HepG2 (cell line): ENCODE measurements at regions of chr13 and their contacts with region 1.

Region 1: GRCh38 chr13:97810152-97810551 is 143.3 kb upstream of the IPO5 start:
- DNase-seq: peak; percentile 13
- ATAC-seq: no peak
- H3K4me3 ChIP-seq: no peak overlapping the region
- H3K27ac ChIP-seq: no peak overlapping the region
- H3K4me1 ChIP-seq: no peaks in the 10 kb centered on the region
- H3K27me3 ChIP-seq: no peaks in the 10 kb centered on the region; a peak in 1 of 5 replicates
- CTCF ChIP-seq: peak; percentile 33
- EP300 ChIP-seq: no peak
- POLR2A ChIP-seq: no peak
- RAD21 ChIP-seq: no peak

Region 2: GRCh38 chr13:97018029-97018831 is 791.9 kb before region 1 on chr13:
- CTCF ChIA-PET with region 1: no interaction called
- POLR2A ChIA-PET with region 1: no interaction called
- in situ Hi-C with region 1: loop called (anchors 25 kb)
- intact Hi-C with region 1: loop called (anchors 1 kb)
- DNase-seq: peak; percentile 36
- ATAC-seq: peak; percentile 85
- H3K4me3 ChIP-seq: no peak overlapping the region
- H3K27ac ChIP-seq: no peak overlapping the region
- H3K4me1 ChIP-seq: no peaks in the 10 kb centered on the region
- H3K27me3 ChIP-seq: peaks cover 1 to 8% of the 10 kb centered on the region in 2 experiments; a peak in 1 of 5 replicates
- CTCF ChIP-seq: peak; percentile 81
- EP300 ChIP-seq: no peak
- POLR2A ChIP-seq: no peak
- RAD21 ChIP-seq: no peak

Region 3: DNA sequence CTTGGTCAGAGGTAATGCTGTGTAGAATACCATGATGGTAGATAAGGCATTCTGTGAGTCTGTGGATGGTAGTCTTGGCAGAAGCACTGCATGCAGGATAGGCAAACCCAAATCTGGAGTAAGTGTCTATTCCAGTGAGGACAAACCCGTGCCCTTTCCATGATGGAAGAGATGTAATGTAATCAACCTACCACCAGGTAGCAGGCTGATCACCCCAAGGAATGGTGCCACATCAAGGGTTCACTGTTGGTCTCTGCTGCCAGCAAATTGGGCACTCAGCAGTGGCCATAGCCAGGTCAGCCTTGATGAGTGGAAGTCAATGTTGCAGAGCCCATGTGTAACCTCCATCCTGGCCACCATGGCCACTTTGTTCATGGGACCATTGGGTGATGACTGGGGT is 221.2 kb before region 1 on chr13:
- CTCF ChIA-PET with region 1: no interaction called
- POLR2A ChIA-PET with region 1: no interaction called
- in situ Hi-C with region 1: no loop called
- intact Hi-C with region 1: loop called (anchors 10 kb)
- DNase-seq: no peak
- ATAC-seq: no peak
- H3K4me3 ChIP-seq: no peak overlapping the region
- H3K27ac ChIP-seq: no peak overlapping the region
- H3K4me1 ChIP-seq: peaks cover 16% of the 10 kb centered on the region
- H3K27me3 ChIP-seq: peaks cover 0 to 3% of the 10 kb centered on the region in 2 experiments; a peak in 2 of 5 replicates
- CTCF ChIP-seq: peak; percentile 18; the same call in 1 of the 2 replicates
- EP300 ChIP-seq: no peak
- POLR2A ChIP-seq: no peak
- RAD21 ChIP-seq: no peak